ENCODE measurements at regions of chr14 and their contacts with region 1.

Region 1: DNA sequence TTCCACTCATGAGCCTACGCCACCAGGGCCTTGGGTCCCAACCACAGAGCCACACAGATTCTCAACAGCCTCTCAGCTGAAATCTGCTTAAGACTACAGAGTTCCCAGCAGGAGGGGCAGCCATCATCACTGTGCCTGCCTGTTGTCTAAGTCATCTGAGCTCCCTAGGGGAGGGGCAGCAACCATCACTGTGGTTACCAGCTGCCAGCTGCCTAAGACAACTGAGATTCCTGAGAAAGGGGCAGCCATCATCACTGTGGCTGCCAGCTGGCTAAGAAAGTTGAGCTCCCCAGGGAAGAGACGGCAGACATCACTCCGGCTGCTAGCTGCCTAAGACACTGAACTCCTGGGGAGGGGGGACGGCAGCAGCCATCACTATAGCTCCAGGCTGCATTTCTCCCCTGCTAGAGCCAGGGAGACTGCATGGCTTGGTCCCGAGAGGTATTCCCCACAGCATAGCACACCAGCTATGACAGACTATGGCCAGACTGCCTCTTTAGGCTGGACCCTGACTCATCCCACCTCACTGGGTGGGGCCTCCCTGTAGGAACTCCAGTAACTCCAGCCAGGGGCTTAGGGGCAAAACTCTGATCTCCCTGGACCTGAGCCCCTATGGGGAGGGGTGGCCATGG is 37.2 kb upstream of the C14orf132 start:
- DNase-seq: no peak
- H3K4me3 ChIP-seq: no peak overlapping the region
- CTCF ChIP-seq: no peak
- POLR2A ChIP-seq: no peak

Region 2: GRCh38 chr14:96053600-96054381 is 51.8 kb after region 1 on chr14:
- intact Hi-C with region 1: no loop called
- DNase-seq: peak; percentile 76 to 87
- H3K4me3 ChIP-seq: no peak overlapping the region
- CTCF ChIP-seq: no peak
- POLR2A ChIP-seq: no peak

Region 3: DNA sequence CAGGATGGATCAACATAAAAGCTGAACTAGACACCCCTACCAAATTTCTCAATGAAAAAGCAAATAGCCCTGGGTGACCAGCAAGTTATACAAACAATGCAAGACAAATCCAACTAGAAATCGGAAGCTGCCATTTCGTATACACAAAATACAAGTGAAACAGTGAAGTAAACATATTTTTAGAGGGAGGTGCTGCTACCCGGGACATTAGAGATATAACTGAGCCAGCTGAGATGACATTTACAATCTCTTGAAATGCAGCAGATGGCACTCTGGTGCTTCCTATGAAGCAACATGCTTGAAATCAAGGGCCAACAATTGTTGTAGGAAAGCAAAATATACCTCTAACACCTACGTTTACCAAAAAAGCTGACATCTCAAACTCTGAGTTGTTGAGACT is 279.5 kb after region 1 on chr14:
- intact Hi-C with region 1: loop called (anchors 10 kb)
- DNase-seq: no peak
- H3K4me3 ChIP-seq: no peak overlapping the region
- CTCF ChIP-seq: no peak
- POLR2A ChIP-seq: no peak